ENCODE measurements at regions of chr21 and their contacts with region 1.

Region 1: DNA sequence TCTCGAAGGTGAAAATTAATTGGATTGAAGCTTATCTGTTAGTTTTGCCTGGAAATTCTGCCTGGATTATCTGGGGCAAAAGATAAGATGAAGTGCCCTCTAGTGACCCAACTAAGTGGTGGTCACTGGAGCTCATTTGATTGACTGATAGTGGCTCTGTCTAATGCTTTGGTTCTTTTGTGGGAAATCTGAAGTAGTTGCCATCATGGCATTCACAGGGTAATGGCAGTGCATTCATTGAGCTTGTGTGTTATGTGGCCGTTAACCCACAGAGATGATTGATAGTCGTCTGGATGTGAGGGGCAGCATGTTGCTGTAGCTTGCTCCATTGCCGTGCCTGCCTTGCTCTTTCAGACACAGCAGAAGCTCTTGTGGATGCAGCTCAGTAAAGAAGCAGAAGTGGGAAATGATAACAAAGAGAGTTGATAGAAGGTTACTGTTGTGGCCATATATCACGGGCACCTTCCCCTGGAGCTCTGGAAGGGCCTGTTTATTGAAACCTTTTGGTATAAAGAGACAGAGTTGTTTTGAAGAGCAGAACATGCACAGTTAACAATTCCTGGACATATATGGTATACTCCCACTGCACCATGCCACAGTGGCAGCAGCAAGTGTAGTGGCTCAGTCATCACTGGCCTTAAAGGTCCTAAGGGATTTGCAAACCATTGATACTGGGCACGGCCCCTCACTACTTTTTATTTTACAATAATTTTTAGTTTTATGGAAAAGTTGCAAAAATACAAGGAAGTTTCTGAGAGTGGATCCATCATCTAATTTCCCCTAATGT is 42.0 kb downstream of the CXADR start:
- DNase-seq: peak; percentile 10
- ATAC-seq: peak; percentile 69
- H3K4me3 ChIP-seq: no peak overlapping the region
- H3K27ac ChIP-seq: no peak overlapping the region
- H3K4me1 ChIP-seq: no peaks in the 10 kb centered on the region
- H3K27me3 ChIP-seq: no peaks in the 10 kb centered on the region
- CTCF ChIP-seq: peak; percentile 35
- POLR2A ChIP-seq: no peak
- RAD21 ChIP-seq: peak; percentile 41; the same call in 1 of the 2 replicates

Region 2: GRCh38 chr21:17527711-17528110 is 27.2 kb before region 1 on chr21:
- CTCF ChIA-PET with region 1: no interaction called
- POLR2A ChIA-PET with region 1: interaction called, 14 read pairs
- dilution Hi-C with region 1: no loop called
- in situ Hi-C with region 1: no loop called
- intact Hi-C with region 1: no loop called
- DNase-seq: no peak
- ATAC-seq: no peak
- H3K4me3 ChIP-seq: no peak overlapping the region
- H3K27ac ChIP-seq: no peak overlapping the region
- H3K4me1 ChIP-seq: no peaks in the 10 kb centered on the region
- H3K27me3 ChIP-seq: no peaks in the 10 kb centered on the region; the same call in 1 of the 2 replicates
- CTCF ChIP-seq: no peak
- POLR2A ChIP-seq: no peak
- RAD21 ChIP-seq: no peak

Measured in IMR-90 (cell line).